MCF 10A (cell line): ENCODE measurements at regions of chr19 and their contacts with region 1.

Region 1: GRCh38 chr19:39110263-39110967 is 15.2 kb upstream of the PAK4 start:
- DNase-seq: peak; percentile 74
- H3K4me3 Mint-ChIP-seq: no peak overlapping the region
- H3K27ac Mint-ChIP-seq: no peak overlapping the region
- H3K4me1 Mint-ChIP-seq: peaks cover 30% of the 10 kb centered on the region
- H3K27me3 Mint-ChIP-seq: no peaks in the 10 kb centered on the region
- CTCF ChIP-seq: peak; percentile 81

Region 2: DNA sequence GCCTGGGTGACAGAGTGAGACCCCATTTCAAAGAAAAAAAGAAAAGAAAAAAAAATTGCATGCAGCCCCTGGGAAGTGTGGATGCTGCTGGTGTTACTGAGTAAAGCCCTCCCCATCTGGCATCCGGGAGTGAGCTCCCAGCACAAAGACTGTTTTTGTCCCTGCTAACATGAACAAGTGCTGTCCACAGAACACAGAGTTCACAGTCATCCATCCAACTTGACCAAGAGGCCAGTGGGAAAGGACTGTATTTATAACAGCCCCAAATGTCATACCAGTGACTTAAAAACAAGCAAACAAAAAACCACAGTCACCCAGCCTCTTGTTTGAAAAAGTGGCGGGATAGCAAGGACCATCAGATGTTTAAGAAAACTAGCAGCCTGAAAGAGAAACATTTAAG is 145.7 kb before region 1 on chr19:
- CTCF ChIA-PET with region 1: interaction called, 29 read pairs
- POLR2A ChIA-PET with region 1: interaction called, 6 read pairs
- intact Hi-C with region 1: loop called (anchors 5 kb)
- DNase-seq: no peak
- H3K4me3 Mint-ChIP-seq: no peak overlapping the region
- H3K27ac Mint-ChIP-seq: no peak overlapping the region
- H3K4me1 Mint-ChIP-seq: peaks cover 5% of the 10 kb centered on the region
- H3K27me3 Mint-ChIP-seq: no peaks in the 10 kb centered on the region
- CTCF ChIP-seq: no peak

Region 3: GRCh38 chr19:39098365-39099269 is 11.8 kb before region 1 on chr19:
- CTCF ChIA-PET with region 1: interaction called, 36 read pairs
- POLR2A ChIA-PET with region 1: no interaction called
- intact Hi-C with region 1: no loop called
- DNase-seq: no peak
- H3K4me3 Mint-ChIP-seq: no peak overlapping the region
- H3K27ac Mint-ChIP-seq: no peak overlapping the region
- H3K4me1 Mint-ChIP-seq: peaks cover 4% of the 10 kb centered on the region
- H3K27me3 Mint-ChIP-seq: peaks cover 5% of the 10 kb centered on the region
- CTCF ChIP-seq: no peak

Region 4: GRCh38 chr19:39328046-39328705 is 217.8 kb after region 1 on chr19:
- CTCF ChIA-PET with region 1: interaction called, 65 read pairs
- POLR2A ChIA-PET with region 1: interaction called, 7 read pairs
- intact Hi-C with region 1: no loop called
- DNase-seq: peak; percentile 80
- H3K4me3 Mint-ChIP-seq: no peak overlapping the region
- H3K27ac Mint-ChIP-seq: no peak overlapping the region
- H3K4me1 Mint-ChIP-seq: no peaks in the 10 kb centered on the region
- H3K27me3 Mint-ChIP-seq: no peaks in the 10 kb centered on the region
- CTCF ChIP-seq: peak; percentile 95

Region 5: GRCh38 chr19:39412100-39412866 is 301.9 kb after region 1 on chr19 and contains the start of gene PLEKHG2:
- CTCF ChIA-PET with region 1: interaction called, 5 read pairs
- POLR2A ChIA-PET with region 1: interaction called, 4 read pairs
- intact Hi-C with region 1: loop called (anchors 2 kb)
- DNase-seq: peak; percentile 100
- H3K4me3 Mint-ChIP-seq: peak within 1 kb of the TSS; percentile 94
- H3K27ac Mint-ChIP-seq: peak within 1 kb of the TSS; percentile 92
- H3K4me1 Mint-ChIP-seq: peaks cover 26% of the 10 kb centered on the region
- H3K27me3 Mint-ChIP-seq: no peaks in the 10 kb centered on the region
- CTCF ChIP-seq: peak; percentile 94
- total RNA-seq, gene PLEKHG2: 19.2 and 19.6 TPM in 2 replicates